ENCODE measurements at regions of chr7 and their contacts with region 1.

Region 1: GRCh38 chr7:131945313-131945911 is 389.0 kb upstream of the PODXL start:
- DNase-seq: peak; percentile 56 to 58
- ATAC-seq: peak; percentile 61 to 86
- H3K4me3 ChIP-seq: peak overlapping the region; percentile 24; the same call in 1 of the 3 replicates
- H3K27ac ChIP-seq: peak overlapping the region; percentile 76 to 92
- H3K4me1 ChIP-seq: peaks cover 45% of the 10 kb centered on the region
- CTCF ChIP-seq: peak; percentile 92
- EP300 ChIP-seq: no peak
- POLR2A ChIP-seq: no peak
- RAD21 ChIP-seq: peak; percentile 95 to 99

Region 2: GRCh38 chr7:131607798-131608500 is 337.5 kb before region 1 on chr7:
- CTCF ChIA-PET with region 1: no interaction called
- POLR2A ChIA-PET with region 1: no interaction called
- DNase-seq: no peak
- ATAC-seq: no peak
- H3K4me3 ChIP-seq: no peak overlapping the region
- H3K27ac ChIP-seq: peak overlapping the region in 1 of 2 experiments; percentile 32; a peak in 1 of 6 replicates
- H3K4me1 ChIP-seq: peaks cover 30% of the 10 kb centered on the region
- CTCF ChIP-seq: no peak
- EP300 ChIP-seq: no peak
- POLR2A ChIP-seq: no peak
- RAD21 ChIP-seq: no peak

Region 3: GRCh38 chr7:131688738-131689661 is 256.4 kb before region 1 on chr7:
- CTCF ChIA-PET with region 1: interaction called, 12 read pairs
- POLR2A ChIA-PET with region 1: no interaction called
- DNase-seq: peak; percentile 57 to 94
- ATAC-seq: peak; percentile 73 to 84
- H3K4me3 ChIP-seq: no peak overlapping the region
- H3K27ac ChIP-seq: no peak overlapping the region
- H3K4me1 ChIP-seq: no peaks in the 10 kb centered on the region
- CTCF ChIP-seq: peak; percentile 92
- EP300 ChIP-seq: no peak
- POLR2A ChIP-seq: no peak
- RAD21 ChIP-seq: peak; percentile 94 to 97

Region 4: GRCh38 chr7:131869169-131869844 is 76.1 kb before region 1 on chr7:
- CTCF ChIA-PET with region 1: interaction called, 15 read pairs
- POLR2A ChIA-PET with region 1: no interaction called
- DNase-seq: no peak
- ATAC-seq: no peak
- H3K4me3 ChIP-seq: no peak overlapping the region
- H3K27ac ChIP-seq: no peak overlapping the region
- H3K4me1 ChIP-seq: no peaks in the 10 kb centered on the region
- CTCF ChIP-seq: no peak
- EP300 ChIP-seq: no peak
- POLR2A ChIP-seq: no peak
- RAD21 ChIP-seq: no peak

Region 5: DNA sequence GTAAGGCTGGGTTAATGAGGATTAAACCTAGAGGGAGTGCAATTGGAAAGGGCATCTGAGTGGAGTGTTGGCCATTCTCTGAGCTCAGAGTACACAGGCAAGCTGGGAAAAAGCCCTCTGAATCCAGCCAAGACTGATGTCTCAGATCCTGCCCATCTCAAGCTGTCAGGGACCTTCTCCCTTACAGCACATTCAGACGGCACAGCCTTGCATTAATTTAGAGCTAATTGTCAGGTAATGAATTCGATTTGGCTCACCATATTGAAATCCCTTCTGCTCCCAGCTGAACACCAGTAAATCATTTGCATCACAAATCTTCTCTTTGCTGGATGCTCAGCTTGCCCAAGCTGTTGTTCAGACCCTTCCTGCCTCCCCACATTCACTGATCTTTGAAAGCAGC is 10.3 kb after region 1 on chr7:
- CTCF ChIA-PET with region 1: interaction called, 17 read pairs
- POLR2A ChIA-PET with region 1: no interaction called
- DNase-seq: no peak
- ATAC-seq: no peak
- H3K4me3 ChIP-seq: no peak overlapping the region
- H3K27ac ChIP-seq: no peak overlapping the region
- H3K4me1 ChIP-seq: peaks cover 15% of the 10 kb centered on the region
- CTCF ChIP-seq: no peak
- EP300 ChIP-seq: no peak
- POLR2A ChIP-seq: no peak
- RAD21 ChIP-seq: no peak

Region 6: DNA sequence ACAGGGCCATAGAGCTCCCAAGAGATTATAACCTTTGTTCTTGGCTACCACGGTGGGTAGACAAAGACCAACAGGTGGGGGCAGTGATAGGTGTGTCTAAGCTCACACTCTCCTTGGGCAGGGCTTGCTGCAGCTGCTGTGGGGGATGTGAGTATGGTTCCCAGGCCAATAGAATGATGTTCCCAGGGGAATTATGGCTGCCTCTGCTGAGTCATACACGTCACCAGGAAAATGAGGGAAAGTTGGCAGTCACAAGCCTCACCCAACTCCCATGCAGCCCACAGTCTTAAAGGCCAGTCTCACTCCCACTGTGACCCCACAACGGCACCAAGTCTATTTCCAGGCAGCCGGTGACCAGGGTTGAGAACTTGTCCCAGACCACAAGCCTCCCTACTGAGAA is 64.4 kb after region 1 on chr7:
- CTCF ChIA-PET with region 1: no interaction called
- POLR2A ChIA-PET with region 1: no interaction called
- DNase-seq: peak in 1 of 2 experiments; percentile 31
- ATAC-seq: no peak
- H3K4me3 ChIP-seq: no peak overlapping the region
- H3K27ac ChIP-seq: no peak overlapping the region
- H3K4me1 ChIP-seq: peaks cover 3% of the 10 kb centered on the region; the same call in 1 of the 3 replicates
- CTCF ChIP-seq: no peak
- EP300 ChIP-seq: no peak
- POLR2A ChIP-seq: no peak
- RAD21 ChIP-seq: no peak

Region 7: GRCh38 chr7:132145466-132145865 is 200.1 kb after region 1 on chr7:
- CTCF ChIA-PET with region 1: interaction called, 12 read pairs
- POLR2A ChIA-PET with region 1: no interaction called
- DNase-seq: peak; percentile 74 to 80
- ATAC-seq: peak; percentile 91 to 94
- H3K4me3 ChIP-seq: no peak overlapping the region
- H3K27ac ChIP-seq: peak overlapping the region; percentile 58 to 73
- H3K4me1 ChIP-seq: peaks cover 39% of the 10 kb centered on the region
- CTCF ChIP-seq: peak; percentile 34
- EP300 ChIP-seq: no peak
- POLR2A ChIP-seq: no peak
- RAD21 ChIP-seq: peak; percentile 46 to 49

Region 8: DNA sequence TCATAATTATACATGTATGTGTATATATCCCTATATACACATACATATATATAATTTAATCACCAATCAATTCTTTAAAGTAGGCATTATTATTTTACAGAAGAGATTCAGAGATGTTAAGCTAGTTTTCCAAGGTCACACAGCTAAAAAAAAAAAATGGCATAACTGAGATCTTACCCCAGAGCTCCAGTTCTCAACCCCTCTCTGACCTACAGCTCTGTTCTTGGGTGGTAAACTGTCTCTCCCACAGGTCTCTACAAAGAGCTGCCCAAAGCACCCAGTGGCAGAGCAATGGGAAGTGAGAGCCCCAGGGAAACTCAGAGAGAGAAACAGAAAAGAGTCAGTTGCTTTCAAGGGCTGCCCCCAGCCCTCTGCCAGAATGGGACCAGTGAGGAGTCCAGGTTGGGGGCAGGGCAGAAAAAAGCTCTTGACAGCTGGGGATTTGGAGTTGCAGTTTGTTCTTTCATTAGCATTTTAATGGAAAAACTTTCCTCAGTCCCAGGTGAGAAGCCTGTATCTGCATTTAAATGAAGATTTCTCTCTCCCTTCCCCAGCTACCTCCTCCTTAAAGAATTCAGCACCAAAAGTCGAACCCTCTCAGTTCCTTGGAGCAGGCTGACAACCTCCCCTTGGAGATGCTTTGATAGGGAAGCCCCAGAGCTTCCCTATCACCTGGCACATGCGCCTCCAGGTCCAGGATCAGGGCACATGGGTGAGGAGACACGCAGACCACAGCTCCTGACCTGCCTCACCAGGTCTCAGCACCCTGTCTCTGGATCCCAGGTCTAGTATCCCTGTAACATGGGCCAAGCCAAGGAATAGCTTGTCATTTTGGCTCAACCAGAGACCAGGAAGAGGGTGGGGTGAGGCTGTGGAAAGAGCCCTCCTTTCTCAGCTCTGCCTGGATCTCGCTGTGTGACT is 242.7 kb after region 1 on chr7:
- CTCF ChIA-PET with region 1: interaction called, 19 read pairs
- POLR2A ChIA-PET with region 1: no interaction called
- DNase-seq: no peak
- ATAC-seq: no peak
- H3K4me3 ChIP-seq: no peak overlapping the region
- H3K27ac ChIP-seq: no peak overlapping the region
- H3K4me1 ChIP-seq: no peaks in the 10 kb centered on the region
- CTCF ChIP-seq: no peak
- EP300 ChIP-seq: no peak
- POLR2A ChIP-seq: no peak
- RAD21 ChIP-seq: no peak

Region 9: DNA sequence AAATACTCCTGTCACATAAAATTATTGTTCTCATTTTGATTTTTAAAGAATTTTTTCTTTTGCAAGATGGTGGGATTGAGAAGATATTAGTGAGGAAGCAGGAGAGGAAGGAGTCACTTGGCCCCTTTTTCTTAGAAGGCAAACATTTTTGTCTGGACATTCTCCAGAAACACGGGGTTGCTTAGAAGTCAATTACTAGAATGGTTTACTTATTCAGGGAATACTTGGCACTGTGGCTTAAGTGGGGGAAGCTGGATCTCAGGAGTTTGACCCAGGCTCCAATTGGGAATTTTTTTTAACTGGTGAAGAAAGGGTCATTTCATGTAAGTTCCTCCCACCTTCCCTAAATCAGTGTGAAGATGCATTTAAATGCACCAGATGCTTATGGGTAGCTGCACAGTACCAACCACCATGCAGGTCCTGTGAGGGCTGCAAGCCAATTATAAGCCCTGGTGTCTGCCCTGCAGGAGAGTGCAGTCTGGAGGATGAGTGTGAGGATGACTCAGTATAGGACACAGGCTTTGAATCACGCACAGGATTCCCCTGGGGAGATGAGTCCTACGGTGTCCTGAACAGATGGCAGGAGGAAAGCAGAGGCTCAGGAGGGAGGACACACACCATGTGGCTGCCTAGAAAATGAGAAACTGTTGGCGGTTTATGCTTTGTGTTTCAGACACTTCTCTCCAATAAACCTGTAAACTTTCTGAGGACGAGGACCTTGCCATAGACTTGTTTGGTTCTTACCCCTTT is 331.7 kb after region 1 on chr7:
- CTCF ChIA-PET with region 1: no interaction called
- POLR2A ChIA-PET with region 1: no interaction called
- DNase-seq: peak; percentile 75 to 77
- ATAC-seq: peak; percentile 96 to 97
- H3K4me3 ChIP-seq: no peak overlapping the region
- H3K27ac ChIP-seq: peak overlapping the region; percentile 61 to 81
- H3K4me1 ChIP-seq: peaks cover 56% of the 10 kb centered on the region
- CTCF ChIP-seq: no peak
- EP300 ChIP-seq: peak; percentile 22; a peak in 1 of 5 replicates
- POLR2A ChIP-seq: no peak
- RAD21 ChIP-seq: no peak; a peak in 1 of 5 replicates

Region 10: DNA sequence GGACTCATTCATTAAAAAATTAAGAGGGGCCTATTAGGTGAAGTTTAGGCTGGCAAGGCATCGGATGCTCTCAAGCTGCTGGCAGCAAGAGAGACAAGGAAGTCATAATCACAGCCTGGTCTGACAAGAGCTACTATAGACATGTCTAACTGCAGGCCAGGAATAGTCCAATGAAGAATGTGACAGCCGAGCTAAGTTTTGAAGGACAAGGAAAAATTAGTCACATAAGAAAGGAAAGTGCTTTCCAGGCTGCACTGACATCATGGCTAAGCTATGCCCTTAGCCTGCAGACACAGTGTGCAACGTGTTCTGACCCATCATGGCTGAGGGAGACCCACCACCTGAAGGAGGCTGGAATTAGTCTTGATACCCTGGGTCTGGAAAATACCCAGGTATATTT is 349.8 kb after region 1 on chr7:
- CTCF ChIA-PET with region 1: interaction called, 11 read pairs
- POLR2A ChIA-PET with region 1: no interaction called
- DNase-seq: no peak
- ATAC-seq: no peak
- H3K4me3 ChIP-seq: no peak overlapping the region
- H3K27ac ChIP-seq: no peak overlapping the region
- H3K4me1 ChIP-seq: peaks cover 8% of the 10 kb centered on the region; the same call in 2 of the 3 replicates
- CTCF ChIP-seq: no peak
- EP300 ChIP-seq: no peak
- POLR2A ChIP-seq: no peak
- RAD21 ChIP-seq: no peak